ENCODE measurements at regions of chr10 and their contacts with region 1.

Region 1: DNA sequence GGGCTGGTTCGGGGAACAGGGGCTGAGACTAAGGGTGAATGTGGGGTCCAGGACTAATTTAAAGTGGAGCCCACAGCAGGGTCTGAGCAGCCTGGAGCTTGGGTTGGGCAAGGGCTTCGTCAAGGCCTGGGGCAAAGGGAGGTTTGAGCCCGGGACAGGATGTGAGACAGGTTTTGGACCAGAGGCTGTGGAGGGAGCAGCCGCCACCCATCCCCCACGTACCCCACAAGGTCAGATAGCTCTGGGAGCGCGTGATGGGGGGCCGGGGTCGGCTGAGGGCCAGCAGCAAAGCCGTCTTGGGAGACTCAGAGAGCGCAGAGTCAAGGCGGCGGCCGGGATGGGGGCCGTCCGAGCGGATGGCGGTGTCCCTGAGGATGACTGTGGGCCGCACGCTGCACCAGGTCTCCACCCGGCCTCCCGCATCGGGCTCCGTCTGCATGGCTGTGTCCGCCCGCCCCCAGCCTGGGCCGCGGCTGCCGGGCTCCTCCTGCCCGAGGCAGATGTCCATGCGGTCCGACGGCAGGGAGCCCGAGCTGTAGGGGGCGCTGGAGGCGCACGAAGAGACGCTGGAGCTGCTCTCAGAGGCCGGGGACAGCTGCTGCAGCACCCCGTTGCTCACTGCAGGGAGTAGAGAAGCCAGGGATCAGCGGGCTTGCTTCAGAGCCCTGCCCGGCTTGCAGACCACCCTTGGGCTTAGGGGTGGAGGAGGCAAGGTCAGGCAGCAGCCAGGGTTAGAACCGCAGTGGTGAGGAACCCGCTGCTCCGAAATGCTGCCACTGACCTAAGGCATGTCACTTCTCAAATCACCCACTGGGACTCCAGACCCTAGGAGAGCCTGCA is 12.1 kb downstream of the PDZD7 start:
- DNase-seq: peak; percentile 85
- CTCF ChIP-seq: peak; percentile 70

Region 2: GRCh38 chr10:101007099-101007711 is 11.6 kb before region 1 on chr10:
- CTCF ChIA-PET with region 1: interaction called, 96 read pairs
- POLR2A ChIA-PET with region 1: no interaction called
- DNase-seq: no peak
- CTCF ChIP-seq: no peak

Region 3: GRCh38 chr10:101042667-101043355 is 24.0 kb after region 1 on chr10:
- CTCF ChIA-PET with region 1: interaction called, 18 read pairs
- POLR2A ChIA-PET with region 1: no interaction called
- DNase-seq: peak; percentile 95
- CTCF ChIP-seq: no peak

Region 4: DNA sequence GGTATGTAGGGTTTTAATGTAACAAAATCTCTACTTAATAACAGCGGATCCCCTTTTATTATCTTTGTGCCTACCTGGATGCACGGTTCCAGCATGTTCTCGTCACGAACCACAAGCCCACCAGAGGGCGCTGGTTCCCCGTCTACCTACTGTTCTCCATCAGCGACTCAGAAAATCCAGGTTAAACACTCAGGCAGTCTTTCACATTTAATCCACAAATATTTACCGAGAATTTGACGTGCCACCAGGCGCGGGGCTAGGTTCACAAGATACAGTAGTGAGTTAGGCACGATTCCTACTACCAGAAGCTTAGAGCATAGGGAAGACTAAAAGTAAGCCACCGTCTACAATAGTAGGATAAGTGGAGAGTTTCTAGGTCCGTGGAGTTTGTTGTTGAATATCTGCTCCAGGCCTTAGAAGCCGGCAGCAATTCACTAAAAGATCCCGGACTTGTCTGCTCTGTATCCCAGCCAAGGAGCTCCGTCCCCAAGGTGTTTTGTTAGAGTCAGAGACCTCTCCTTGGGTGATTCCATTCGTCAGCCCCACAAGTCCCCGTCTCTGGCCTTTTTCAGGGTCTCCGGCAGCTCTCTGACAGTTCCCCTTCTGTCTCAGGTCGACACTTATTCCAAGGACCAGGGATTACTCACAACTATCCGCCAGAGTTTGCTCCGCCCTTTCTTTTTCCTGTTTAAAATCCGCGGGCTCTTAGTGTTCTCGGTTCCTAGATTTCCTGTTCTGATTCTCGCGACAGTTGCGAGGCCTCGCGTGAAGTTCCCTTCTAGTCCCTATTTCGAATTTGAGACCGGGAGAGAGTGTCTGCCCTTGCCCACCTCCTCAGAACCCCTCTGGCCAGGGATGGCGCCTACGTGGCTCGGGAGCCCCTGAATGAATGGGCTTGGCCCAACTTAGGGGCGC is 41.5 kb after region 1 on chr10:
- CTCF ChIA-PET with region 1: interaction called, 27 read pairs
- POLR2A ChIA-PET with region 1: no interaction called
- DNase-seq: peak; percentile 85
- CTCF ChIP-seq: peak; percentile 90

Region 5: GRCh38 chr10:101176577-101176976 is 157.8 kb after region 1 on chr10:
- CTCF ChIA-PET with region 1: no interaction called
- POLR2A ChIA-PET with region 1: no interaction called
- DNase-seq: no peak
- CTCF ChIP-seq: no peak

Region 6: GRCh38 chr10:102461187-102462054 is 1442.6 kb after region 1 on chr10:
- CTCF ChIA-PET with region 1: no interaction called
- POLR2A ChIA-PET with region 1: no interaction called
- DNase-seq: peak; percentile 100
- CTCF ChIP-seq: no peak

Measured in GM10248 (cell line).